GM10248 (cell line): ENCODE measurements at regions of chr19 and their contacts with region 1.

Region 1: DNA sequence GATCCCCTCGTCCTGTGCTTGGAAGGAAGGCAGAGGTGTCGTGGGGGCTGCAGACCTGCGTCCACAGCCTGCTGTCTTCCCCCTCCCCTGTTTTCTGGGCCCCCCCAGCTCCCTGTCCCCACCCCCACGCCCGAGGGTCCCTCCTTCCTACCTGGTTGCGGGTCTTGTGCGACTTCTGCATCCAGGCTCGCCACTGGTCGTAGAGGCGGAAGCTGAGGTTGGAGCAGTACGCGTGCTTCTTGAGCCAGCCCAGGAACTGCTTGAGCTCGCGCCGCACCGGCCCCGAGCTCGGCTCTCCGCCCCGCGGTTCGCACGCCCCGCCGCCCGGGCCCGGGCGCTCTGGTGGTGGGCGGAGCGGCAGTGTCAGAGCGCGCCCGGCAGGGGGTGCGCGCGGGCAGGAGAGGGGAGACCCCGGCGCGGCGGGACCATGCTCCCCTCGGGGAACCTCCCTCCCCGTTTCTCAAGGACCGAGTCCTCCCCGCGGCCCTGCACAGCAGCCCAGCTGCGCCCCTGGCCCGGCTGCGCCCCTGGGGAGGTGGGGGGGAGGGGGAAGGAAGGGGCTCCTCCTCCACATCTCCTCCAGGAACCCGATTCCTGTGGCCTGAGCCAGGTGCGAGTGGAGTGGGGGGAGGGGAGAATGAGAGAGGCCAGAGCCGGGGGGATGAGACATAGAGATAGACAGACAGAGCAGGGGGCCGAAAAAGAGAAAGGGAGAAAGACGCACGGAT is 5.7 kb downstream of the REX1BD start:
- DNase-seq: peak; percentile 92
- CTCF ChIP-seq: peak; percentile 83

Region 2: GRCh38 chr19:18612772-18613588 is 18.7 kb after region 1 on chr19 and contains the start of gene TMEM59L:
- CTCF ChIA-PET with region 1: interaction called, 13 read pairs
- POLR2A ChIA-PET with region 1: no interaction called
- DNase-seq: peak; percentile 39
- CTCF ChIP-seq: no peak

Region 3: GRCh38 chr19:18675779-18676178 is 81.5 kb after region 1 on chr19:
- CTCF ChIA-PET with region 1: interaction called, 20 read pairs
- POLR2A ChIA-PET with region 1: no interaction called
- DNase-seq: no peak
- CTCF ChIP-seq: peak; percentile 27